Astrocyte of the cerebellum (primary cell): ENCODE measurements at regions of chr6 and their contacts with region 1.

Region 1: DNA sequence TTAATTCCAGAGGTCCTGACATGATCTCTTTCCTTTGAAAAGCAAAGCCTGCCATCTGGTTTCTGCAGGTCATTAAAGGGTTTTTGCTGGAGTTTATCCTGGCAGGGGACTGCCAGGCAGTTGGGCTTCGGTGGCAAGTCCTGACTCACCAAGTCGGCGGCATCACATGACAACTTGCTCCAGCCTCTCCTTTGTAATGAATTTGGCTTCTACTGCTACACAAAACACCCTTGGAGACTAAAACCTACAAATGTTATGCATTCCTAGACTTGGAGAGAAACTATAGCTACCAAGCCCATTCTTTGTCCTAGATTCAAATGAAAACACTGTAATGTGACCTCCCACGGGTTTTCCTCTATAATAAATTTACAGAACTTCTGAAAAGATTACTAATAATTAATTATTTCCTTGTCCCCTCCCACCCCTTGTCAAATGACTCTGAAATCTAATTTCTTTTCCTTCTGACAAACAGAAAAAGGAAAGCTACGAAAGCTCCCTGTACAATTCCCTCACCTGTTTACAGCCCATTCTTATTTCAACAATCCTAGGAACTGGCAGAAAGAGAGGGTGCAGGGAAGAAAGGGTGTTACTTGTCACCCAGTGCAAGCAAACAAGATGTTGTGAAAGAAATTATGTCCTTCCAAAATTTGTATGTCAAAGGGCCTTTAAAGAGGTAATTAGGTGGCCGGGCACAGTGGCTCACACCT is 62.9 kb downstream of the QRSL1 start:
- DNase-seq: peak; percentile 71
- H3K4me3 ChIP-seq: no peak overlapping the region
- CTCF ChIP-seq: no peak

Region 2: DNA sequence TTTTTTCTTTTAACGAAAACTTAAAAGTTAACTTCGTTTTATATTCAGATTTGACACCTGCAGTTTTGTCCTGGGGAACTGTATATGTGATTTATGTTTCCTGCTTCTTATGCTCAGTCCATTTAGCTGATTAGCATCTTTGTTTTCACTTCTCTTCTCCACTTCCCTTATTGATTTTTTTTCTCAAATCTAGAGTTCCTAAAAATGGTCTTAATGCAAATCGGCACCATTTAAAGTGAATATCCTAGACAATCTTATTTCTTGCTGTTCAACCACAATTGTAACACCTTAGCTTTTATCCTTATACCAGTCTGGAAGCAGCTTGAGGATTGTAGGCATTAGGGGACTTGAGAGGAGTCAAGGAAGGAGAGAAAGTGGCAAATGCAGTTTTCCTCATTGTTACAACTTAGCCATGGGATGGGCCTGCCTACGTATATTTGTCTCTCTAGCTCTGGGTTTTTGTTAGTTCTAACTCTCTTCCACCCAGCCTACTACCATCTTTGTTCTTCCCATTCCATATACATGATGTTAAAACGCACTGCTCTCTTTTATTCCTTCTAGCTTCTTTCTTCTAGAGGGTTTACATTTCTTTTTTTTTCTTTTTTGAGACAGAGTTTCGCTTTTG is 54.4 kb before region 1 on chr6:
- in situ Hi-C with region 1: loop called (anchors 10 kb)
- DNase-seq: no peak
- H3K4me3 ChIP-seq: no peak overlapping the region
- CTCF ChIP-seq: no peak

Region 3: DNA sequence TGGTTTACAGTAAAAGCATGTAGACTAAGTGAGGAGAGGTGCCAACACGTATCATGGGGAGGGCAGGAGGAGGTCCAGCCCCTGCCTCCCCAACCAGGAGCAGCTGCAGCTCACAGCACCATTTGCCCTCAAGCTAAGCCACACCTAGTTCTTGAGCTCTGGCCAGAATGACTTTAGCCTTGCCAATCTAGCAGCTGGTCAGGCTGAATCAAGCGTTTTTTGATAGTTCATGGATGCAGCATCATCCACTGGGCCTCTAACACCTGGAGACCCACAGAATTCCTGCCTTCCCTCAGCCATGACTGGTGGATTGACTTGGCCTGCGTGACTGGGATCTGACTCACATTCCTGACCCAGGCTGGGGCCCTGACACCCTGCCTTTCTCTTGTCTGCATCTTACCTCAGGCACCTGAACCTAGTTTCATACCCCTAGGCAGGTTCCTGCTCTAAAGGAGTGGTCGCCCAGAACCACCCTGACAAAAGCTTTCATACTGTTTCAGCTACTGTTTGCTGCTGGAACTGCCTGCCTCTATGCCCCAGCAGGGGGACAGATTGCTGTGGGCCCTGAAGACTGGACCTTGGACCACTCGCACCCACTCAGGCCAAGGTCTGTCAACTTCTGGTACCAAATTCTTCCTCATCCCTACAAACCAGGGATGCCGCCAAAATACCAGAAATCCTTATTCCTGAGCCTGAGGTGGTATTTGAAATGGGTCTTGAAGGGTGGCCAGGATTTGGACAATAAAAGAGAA is 59.4 kb after region 1 on chr6:
- in situ Hi-C with region 1: no loop called
- DNase-seq: no peak
- H3K4me3 ChIP-seq: no peak overlapping the region
- CTCF ChIP-seq: no peak